GM12878 (cell line): ENCODE measurements at regions of chr17 and their contacts with region 1.

Region 1: DNA sequence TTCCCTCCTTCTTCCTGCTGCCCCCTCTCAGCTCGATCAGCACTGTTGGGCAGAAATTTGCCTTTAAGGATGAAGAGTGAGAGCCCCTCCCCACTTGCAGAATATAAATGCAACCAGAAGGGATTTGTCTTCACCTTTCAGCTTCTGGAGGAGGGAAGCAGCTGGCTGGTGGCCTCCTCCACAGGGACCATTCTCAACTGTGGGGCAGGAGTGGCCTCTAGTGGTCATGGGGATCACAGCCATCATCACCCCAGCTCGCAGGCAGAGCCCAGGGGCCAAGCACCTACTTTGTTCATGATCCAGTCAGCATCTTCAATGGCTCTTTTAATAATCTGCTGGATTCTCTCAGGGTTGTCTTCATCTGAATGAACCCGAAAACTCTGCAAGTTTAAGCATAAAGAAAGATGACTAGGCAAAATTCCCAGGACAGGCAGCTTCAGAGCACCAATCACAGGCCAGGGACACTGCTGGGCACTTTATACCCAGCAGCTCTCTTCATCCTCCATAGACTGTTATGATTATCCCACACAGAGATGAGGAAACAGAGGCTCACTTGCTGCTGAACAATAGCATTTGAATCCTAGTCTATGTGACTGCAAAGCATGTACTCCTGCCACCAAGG is 13.1 kb downstream of the LYRM9 start:
- DNase-seq: peak; percentile 23
- ATAC-seq: peak; percentile 99
- H3K4me3 ChIP-seq: no peak overlapping the region
- H3K27ac ChIP-seq: no peak overlapping the region
- H3K4me1 ChIP-seq: no peaks in the 10 kb centered on the region
- H3K27me3 ChIP-seq: no peaks in the 10 kb centered on the region
- CTCF ChIP-seq: peak; percentile 92 to 98 (median 95)
- EP300 ChIP-seq: no peak
- POLR2A ChIP-seq: no peak
- RAD21 ChIP-seq: peak; percentile 97

Region 2: GRCh38 chr17:27446569-27447301 is 433.4 kb before region 1 on chr17:
- CTCF ChIA-PET with region 1: no interaction called
- POLR2A ChIA-PET with region 1: no interaction called
- RAD21 ChIA-PET with region 1: no interaction called
- SMC1A ChIA-PET with region 1: no interaction called
- in situ Hi-C with region 1: loop called (anchors 10 kb)
- intact Hi-C with region 1: no loop called
- DNase-seq: no peak
- ATAC-seq: no peak
- H3K4me3 ChIP-seq: no peak overlapping the region
- H3K27ac ChIP-seq: no peak overlapping the region
- H3K4me1 ChIP-seq: no peaks in the 10 kb centered on the region
- H3K27me3 ChIP-seq: no peaks in the 10 kb centered on the region
- CTCF ChIP-seq: no peak
- EP300 ChIP-seq: no peak
- POLR2A ChIP-seq: no peak
- RAD21 ChIP-seq: no peak

Region 3: DNA sequence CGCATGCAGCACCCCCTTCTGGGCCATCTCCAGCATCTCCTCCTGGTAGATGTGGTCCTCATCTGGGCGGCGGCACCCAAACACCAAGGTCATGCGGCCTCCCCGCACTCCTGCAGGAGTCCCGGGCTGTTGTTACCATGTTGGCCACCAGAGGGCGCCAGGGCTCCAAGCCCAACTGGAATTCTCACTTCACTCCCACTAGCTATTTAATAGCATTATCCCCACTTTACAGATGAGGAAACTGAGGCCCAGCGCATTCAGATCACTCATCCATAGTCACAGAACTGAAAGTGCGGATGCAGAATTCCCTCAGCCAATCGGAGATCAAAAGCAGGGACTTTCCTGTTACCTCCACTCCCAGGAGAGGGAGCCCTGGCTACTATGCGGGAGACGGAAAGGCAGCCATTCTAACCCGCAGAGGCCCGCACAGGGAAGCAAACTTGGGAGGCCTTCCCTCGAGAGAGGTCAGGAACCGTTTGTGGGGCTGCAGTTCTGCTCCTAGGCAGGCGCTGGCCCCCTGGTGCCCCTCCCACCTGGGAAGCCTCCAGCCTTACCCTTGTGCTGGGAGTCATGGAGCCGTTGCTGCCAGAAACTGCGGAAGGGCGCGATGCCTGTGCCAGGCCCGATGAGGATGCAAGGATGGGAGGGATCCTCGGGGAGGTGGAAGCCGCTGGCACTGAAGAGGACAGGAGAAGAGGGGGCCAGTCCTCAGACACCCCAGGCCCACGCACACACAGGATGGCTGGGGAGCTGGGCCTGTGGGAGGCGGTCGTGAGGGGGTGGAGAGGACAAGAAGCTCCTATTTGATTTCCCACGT is 119.8 kb before region 1 on chr17:
- CTCF ChIA-PET with region 1: interaction called, 179 read pairs
- POLR2A ChIA-PET with region 1: no interaction called
- RAD21 ChIA-PET with region 1: interaction called, 64 read pairs
- SMC1A ChIA-PET with region 1: interaction called, 39 read pairs
- in situ Hi-C with region 1: loop called (anchors 5 kb)
- intact Hi-C with region 1: loop called (anchors 1 kb)
- DNase-seq: no peak
- ATAC-seq: peak; percentile 84
- H3K4me3 ChIP-seq: no peak overlapping the region
- H3K27ac ChIP-seq: no peak overlapping the region
- H3K4me1 ChIP-seq: no peaks in the 10 kb centered on the region
- H3K27me3 ChIP-seq: no peaks in the 10 kb centered on the region
- CTCF ChIP-seq: peak; percentile 76 to 91 (median 78)
- EP300 ChIP-seq: no peak
- POLR2A ChIP-seq: no peak
- RAD21 ChIP-seq: peak; percentile 62

Region 4: GRCh38 chr17:27846042-27846655 is 33.9 kb before region 1 on chr17:
- CTCF ChIA-PET with region 1: interaction called, 13 read pairs
- POLR2A ChIA-PET with region 1: no interaction called
- RAD21 ChIA-PET with region 1: no interaction called
- SMC1A ChIA-PET with region 1: interaction called, 4 read pairs
- in situ Hi-C with region 1: no loop called
- intact Hi-C with region 1: no loop called
- DNase-seq: no peak
- ATAC-seq: no peak
- H3K4me3 ChIP-seq: no peak overlapping the region
- H3K27ac ChIP-seq: no peak overlapping the region
- H3K4me1 ChIP-seq: peaks cover 3% of the 10 kb centered on the region; the same call in 1 of the 2 replicates
- H3K27me3 ChIP-seq: no peaks in the 10 kb centered on the region
- CTCF ChIP-seq: no peak
- EP300 ChIP-seq: no peak
- POLR2A ChIP-seq: no peak
- RAD21 ChIP-seq: no peak

Region 5: DNA sequence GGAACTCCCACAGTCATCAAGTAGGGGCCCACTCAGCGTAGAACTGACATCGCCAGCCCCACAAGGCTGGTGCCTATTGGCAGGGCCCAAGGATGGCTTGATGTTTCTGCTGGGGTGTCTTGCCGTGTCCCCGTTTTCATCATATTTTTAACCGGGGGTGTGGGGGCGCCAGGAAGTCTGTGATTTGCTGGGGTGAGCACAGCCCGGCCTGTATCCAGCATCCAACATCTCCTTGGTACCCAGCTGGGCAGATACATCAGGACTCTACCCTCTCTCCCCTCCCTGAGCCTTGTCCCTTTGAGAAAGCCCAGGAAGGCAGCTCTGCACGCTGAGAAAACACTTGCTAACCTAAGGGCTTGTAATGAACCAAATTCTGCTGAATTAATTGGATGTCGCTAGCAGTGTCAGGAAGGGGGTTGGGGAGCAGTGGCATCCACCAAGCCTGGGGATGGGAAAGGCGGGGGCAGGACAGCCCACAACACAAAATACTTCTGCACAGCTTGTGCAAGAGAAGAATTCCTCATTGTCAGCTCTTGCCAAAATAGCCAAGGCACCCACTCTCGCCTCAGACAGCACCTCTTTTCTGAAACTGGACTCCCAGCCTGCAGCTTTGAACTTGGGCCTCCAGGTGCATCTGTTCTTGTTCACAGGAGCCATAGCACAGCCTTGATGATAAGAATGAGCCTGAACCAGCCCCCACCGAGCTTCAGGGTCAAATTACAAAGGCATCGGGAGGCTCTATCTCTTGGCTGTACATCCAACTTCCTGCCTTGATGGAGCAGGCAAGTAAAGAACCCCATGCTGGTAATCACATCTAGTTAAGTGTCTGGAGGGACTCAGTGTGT is 76.7 kb after region 1 on chr17:
- CTCF ChIA-PET with region 1: no interaction called
- POLR2A ChIA-PET with region 1: no interaction called
- RAD21 ChIA-PET with region 1: no interaction called
- SMC1A ChIA-PET with region 1: no interaction called
- in situ Hi-C with region 1: no loop called
- intact Hi-C with region 1: no loop called
- DNase-seq: no peak
- ATAC-seq: no peak
- H3K4me3 ChIP-seq: no peak overlapping the region
- H3K27ac ChIP-seq: no peak overlapping the region
- H3K4me1 ChIP-seq: no peaks in the 10 kb centered on the region
- H3K27me3 ChIP-seq: no peaks in the 10 kb centered on the region
- CTCF ChIP-seq: no peak
- EP300 ChIP-seq: no peak
- POLR2A ChIP-seq: no peak
- RAD21 ChIP-seq: no peak

Region 6: GRCh38 chr17:28252436-28252835 is 372.3 kb after region 1 on chr17:
- CTCF ChIA-PET with region 1: interaction called, 18 read pairs
- POLR2A ChIA-PET with region 1: no interaction called
- RAD21 ChIA-PET with region 1: interaction called, 6 read pairs
- SMC1A ChIA-PET with region 1: interaction called, 6 read pairs
- in situ Hi-C with region 1: no loop called
- intact Hi-C with region 1: no loop called
- DNase-seq: no peak
- ATAC-seq: no peak
- H3K4me3 ChIP-seq: no peak overlapping the region
- H3K27ac ChIP-seq: no peak overlapping the region
- H3K4me1 ChIP-seq: no peaks in the 10 kb centered on the region
- H3K27me3 ChIP-seq: no peaks in the 10 kb centered on the region
- CTCF ChIP-seq: no peak
- EP300 ChIP-seq: no peak
- POLR2A ChIP-seq: no peak
- RAD21 ChIP-seq: no peak